ENCODE measurements at regions of chr9 and their contacts with region 1.

Region 1: DNA sequence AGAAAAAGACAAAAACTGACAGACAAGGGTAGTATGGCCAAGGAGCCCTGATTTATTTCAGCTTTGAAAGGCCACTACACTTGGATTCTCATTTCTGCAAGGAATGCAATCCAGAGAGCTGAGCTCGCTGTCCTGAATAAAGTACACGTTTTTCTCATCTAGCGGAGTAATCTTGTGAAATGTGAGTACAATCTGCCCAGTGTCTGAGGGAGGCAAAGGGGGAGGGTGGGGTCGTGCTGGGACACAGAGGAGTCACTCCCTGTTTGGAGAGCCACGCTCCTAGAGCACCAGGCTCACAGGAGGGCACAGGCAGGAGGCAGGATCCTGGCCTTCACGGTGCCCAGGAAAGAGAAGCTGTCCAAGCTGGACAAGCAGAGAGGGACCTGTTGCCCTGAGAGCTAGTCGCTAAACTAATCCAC is 51.0 kb upstream of the IFNK start:
- DNase-seq: peak; percentile 67
- ATAC-seq: peak; percentile 71
- H3K4me3 ChIP-seq: no peak overlapping the region
- H3K27ac ChIP-seq: peak overlapping the region; percentile 34
- H3K4me1 ChIP-seq: peaks cover 32% of the 10 kb centered on the region
- H3K27me3 ChIP-seq: no peaks in the 10 kb centered on the region
- CTCF ChIP-seq: no peak

Region 2: DNA sequence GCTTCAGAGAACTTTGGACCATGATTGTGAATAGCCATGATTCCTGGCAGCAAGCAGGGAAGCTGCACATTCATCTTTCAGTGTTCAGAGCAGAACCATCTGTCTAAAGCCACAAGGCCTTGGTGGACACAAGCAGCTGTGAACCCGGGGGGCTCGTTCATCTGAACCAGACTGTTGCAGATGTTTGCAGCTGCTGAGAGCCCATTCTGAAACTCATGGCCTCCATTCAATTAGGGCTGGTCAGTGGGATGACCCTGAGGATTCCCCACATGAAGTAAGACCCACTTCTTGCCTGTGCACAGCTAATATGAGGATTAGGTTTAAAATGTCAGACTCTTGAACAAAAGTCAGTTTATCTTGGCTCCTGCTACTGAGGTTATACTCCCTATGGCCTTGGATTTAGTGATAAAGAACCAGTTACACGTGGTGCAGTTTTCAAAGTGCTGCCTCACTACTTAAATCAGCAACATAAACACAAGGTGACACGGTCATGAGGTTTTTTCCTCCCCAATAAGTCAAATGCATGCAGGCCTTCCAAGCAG is 58.8 kb before region 1 on chr9:
- intact Hi-C with region 1: loop called (anchors 10 kb)
- DNase-seq: no peak
- ATAC-seq: peak; percentile 46
- H3K4me3 ChIP-seq: no peak overlapping the region
- H3K27ac ChIP-seq: peak overlapping the region; percentile 17
- H3K4me1 ChIP-seq: peaks cover 13% of the 10 kb centered on the region
- H3K27me3 ChIP-seq: no peaks in the 10 kb centered on the region
- CTCF ChIP-seq: no peak

Region 3: GRCh38 chr9:27618066-27618465 is 144.9 kb after region 1 on chr9:
- intact Hi-C with region 1: no loop called
- DNase-seq: no peak
- ATAC-seq: no peak
- H3K4me3 ChIP-seq: no peak overlapping the region
- H3K27ac ChIP-seq: no peak overlapping the region
- H3K4me1 ChIP-seq: no peaks in the 10 kb centered on the region
- H3K27me3 ChIP-seq: no peaks in the 10 kb centered on the region
- CTCF ChIP-seq: no peak